Breast epithelium (tissue), 4 donors: ENCODE measurements at regions of chr9 and their contacts with region 1.

Region 1: GRCh38 chr9:78507037-78507436 is 210.1 kb downstream of the PSAT1 start:
- DNase-seq: no peak
- H3K4me3 ChIP-seq: no peak overlapping the region
- H3K27ac ChIP-seq: no peak overlapping the region
- H3K4me1 ChIP-seq: no peaks in the 10 kb centered on the region
- H3K27me3 ChIP-seq: no peaks in the 10 kb centered on the region
- CTCF ChIP-seq: no peak
- POLR2A ChIP-seq: no peak

Region 2: GRCh38 chr9:79213417-79214125 is 706.5 kb after region 1 on chr9:
- intact Hi-C with region 1: loop called (anchors 5 kb)
- DNase-seq: no peak
- H3K4me3 ChIP-seq: no peak overlapping the region
- H3K27ac ChIP-seq: no peak overlapping the region
- H3K4me1 ChIP-seq: no peaks in the 10 kb centered on the region
- H3K27me3 ChIP-seq: no peaks in the 10 kb centered on the region
- CTCF ChIP-seq: no peak
- POLR2A ChIP-seq: no peak